Heart left ventricle (tissue), 16 donors: ENCODE measurements at regions of chr12 and their contacts with region 1.

Region 1: GRCh38 chr12:106345739-106346138 is 11.8 kb upstream of the POLR3B start:
- DNase-seq: peak in 4 of 5 donors; percentile 26 to 59 (median 34)
- ATAC-seq: peak; percentile 16 to 65 (median 58)
- H3K4me3 ChIP-seq: no peak overlapping the region
- H3K27ac ChIP-seq: peak overlapping the region in 4 of 12 donors; percentile 5 to 81 (median 54)
- H3K4me1 ChIP-seq: peaks cover 10 to 41% (median 31%) of the 10 kb centered on the region in 12 donors
- H3K27me3 ChIP-seq: no peaks in the 10 kb centered on the region
- CTCF ChIP-seq: peak; percentile 13 to 63 (median 44)
- POLR2A ChIP-seq: no peak

Region 2: GRCh38 chr12:106223485-106224354 is 122.0 kb before region 1 on chr12:
- intact Hi-C with region 1: loop called in 8 of 10 experiments (anchors 2 to 5 kb)
- DNase-seq: peak; percentile 68 to 79 (median 74)
- ATAC-seq: peak; percentile 38 to 79 (median 75)
- H3K4me3 ChIP-seq: no peak overlapping the region
- H3K27ac ChIP-seq: no peak overlapping the region
- H3K4me1 ChIP-seq: peaks cover 0 to 19% (median 8%) of the 10 kb centered on the region in 12 donors
- H3K27me3 ChIP-seq: no peaks in the 10 kb centered on the region
- CTCF ChIP-seq: peak; percentile 92 to 98 (median 94)
- POLR2A ChIP-seq: no peak

Region 3: GRCh38 chr12:106234449-106234848 is 111.3 kb before region 1 on chr12:
- intact Hi-C with region 1: loop called in 5 of 10 experiments (anchors 5 kb)
- DNase-seq: no peak
- ATAC-seq: no peak
- H3K4me3 ChIP-seq: no peak overlapping the region
- H3K27ac ChIP-seq: no peak overlapping the region
- H3K4me1 ChIP-seq: peaks cover 0 to 21% (median 4%) of the 10 kb centered on the region in 12 donors
- H3K27me3 ChIP-seq: no peaks in the 10 kb centered on the region
- CTCF ChIP-seq: no peak
- POLR2A ChIP-seq: no peak

Region 4: DNA sequence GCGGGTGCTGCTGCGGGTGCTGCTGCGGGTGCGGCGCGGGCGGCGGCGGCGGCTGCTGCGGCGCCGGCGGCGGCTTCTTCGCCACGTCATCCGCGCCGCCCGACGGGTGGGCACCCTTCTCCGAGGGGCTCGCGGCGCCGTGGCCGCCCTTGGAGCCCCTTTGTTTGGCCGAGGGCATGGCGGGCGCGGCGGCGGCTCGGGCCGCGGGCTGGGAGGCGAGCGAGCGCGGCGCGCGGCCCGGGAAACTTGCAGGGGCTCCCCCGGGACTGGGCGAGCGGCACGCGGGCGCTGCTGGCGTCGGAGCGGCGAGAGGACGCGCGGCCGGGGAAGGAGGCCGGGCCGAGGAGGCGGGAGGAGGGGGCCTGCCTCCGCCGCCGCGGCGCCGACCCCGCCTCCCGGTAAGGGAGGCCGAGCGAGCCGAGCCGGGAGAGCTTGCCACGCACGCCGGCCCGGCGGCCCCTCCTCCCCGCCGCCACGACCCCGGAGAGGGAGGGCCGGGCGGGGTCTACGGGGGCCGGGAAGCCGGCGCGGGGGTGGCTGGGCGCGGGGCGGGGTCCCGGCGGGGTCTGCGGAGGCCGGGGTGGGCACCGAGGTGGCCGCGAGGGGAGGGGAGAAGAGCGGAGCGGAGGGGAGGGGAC is 97.9 kb before region 1 on chr12 and contains the start of gene CKAP4:
- intact Hi-C with region 1: loop called in 3 of 10 experiments (anchors 5 kb)
- DNase-seq: peak; percentile 87 to 92 (median 87)
- ATAC-seq: peak; percentile 45 to 85 (median 84)
- H3K4me3 ChIP-seq: peak within 1 kb of the TSS; percentile 75 to 95 (median 91)
- H3K27ac ChIP-seq: peak within 1 kb of the TSS; percentile 90 to 100 (median 99)
- H3K4me1 ChIP-seq: peaks cover 3 to 55% (median 36%) of the 10 kb centered on the region in 12 donors
- H3K27me3 ChIP-seq: no peaks in the 10 kb centered on the region
- CTCF ChIP-seq: no peak
- POLR2A ChIP-seq: peak in 1 of 2 donors; percentile 42
- total RNA-seq, gene CKAP4: 39.9 to 70.7 (median 53.7) TPM

Region 5: GRCh38 chr12:106282457-106283097 is 63.2 kb before region 1 on chr12:
- intact Hi-C with region 1: loop called in 1 of 10 experiments (anchors 5 kb)
- DNase-seq: peak in 2 of 5 donors; percentile 34 to 47
- ATAC-seq: peak; percentile 23 to 63 (median 56)
- H3K4me3 ChIP-seq: no peak overlapping the region
- H3K27ac ChIP-seq: no peak overlapping the region
- H3K4me1 ChIP-seq: peaks cover 0 to 22% (median 12%) of the 10 kb centered on the region in 12 donors
- H3K27me3 ChIP-seq: no peaks in the 10 kb centered on the region
- CTCF ChIP-seq: peak; percentile 56 to 76 (median 70)
- POLR2A ChIP-seq: no peak

Region 6: GRCh38 chr12:106302401-106303201 is 43.1 kb before region 1 on chr12 and contains the start of gene TCP11L2:
- intact Hi-C with region 1: loop called in 6 of 10 experiments (anchors 5 kb)
- DNase-seq: peak; percentile 89 to 94 (median 92)
- ATAC-seq: peak; percentile 66 to 85 (median 80)
- H3K4me3 ChIP-seq: peak within 1 kb of the TSS; percentile 80 to 97 (median 94)
- H3K27ac ChIP-seq: peak within 1 kb of the TSS; percentile 92 to 100 (median 98)
- H3K4me1 ChIP-seq: peaks cover 8 to 72% (median 63%) of the 10 kb centered on the region in 12 donors
- H3K27me3 ChIP-seq: no peaks in the 10 kb centered on the region
- CTCF ChIP-seq: no peak
- POLR2A ChIP-seq: peak in 1 of 2 donors; percentile 82
- total RNA-seq, gene TCP11L2: 60.8 to 147 (median 113) TPM

Region 7: GRCh38 chr12:106309671-106310505 is 35.9 kb before region 1 on chr12:
- intact Hi-C with region 1: loop called in 4 of 10 experiments (anchors 5 kb)
- DNase-seq: peak in 2 of 5 donors; percentile 35 to 39
- ATAC-seq: peak in 3 of 4 donors; percentile 13 to 47 (median 28)
- H3K4me3 ChIP-seq: no peak overlapping the region
- H3K27ac ChIP-seq: peak overlapping the region in 11 of 12 donors; percentile 11 to 100 (median 52)
- H3K4me1 ChIP-seq: peaks cover 4 to 74% (median 65%) of the 10 kb centered on the region in 12 donors
- H3K27me3 ChIP-seq: no peaks in the 10 kb centered on the region
- CTCF ChIP-seq: no peak
- POLR2A ChIP-seq: no peak

Region 8: DNA sequence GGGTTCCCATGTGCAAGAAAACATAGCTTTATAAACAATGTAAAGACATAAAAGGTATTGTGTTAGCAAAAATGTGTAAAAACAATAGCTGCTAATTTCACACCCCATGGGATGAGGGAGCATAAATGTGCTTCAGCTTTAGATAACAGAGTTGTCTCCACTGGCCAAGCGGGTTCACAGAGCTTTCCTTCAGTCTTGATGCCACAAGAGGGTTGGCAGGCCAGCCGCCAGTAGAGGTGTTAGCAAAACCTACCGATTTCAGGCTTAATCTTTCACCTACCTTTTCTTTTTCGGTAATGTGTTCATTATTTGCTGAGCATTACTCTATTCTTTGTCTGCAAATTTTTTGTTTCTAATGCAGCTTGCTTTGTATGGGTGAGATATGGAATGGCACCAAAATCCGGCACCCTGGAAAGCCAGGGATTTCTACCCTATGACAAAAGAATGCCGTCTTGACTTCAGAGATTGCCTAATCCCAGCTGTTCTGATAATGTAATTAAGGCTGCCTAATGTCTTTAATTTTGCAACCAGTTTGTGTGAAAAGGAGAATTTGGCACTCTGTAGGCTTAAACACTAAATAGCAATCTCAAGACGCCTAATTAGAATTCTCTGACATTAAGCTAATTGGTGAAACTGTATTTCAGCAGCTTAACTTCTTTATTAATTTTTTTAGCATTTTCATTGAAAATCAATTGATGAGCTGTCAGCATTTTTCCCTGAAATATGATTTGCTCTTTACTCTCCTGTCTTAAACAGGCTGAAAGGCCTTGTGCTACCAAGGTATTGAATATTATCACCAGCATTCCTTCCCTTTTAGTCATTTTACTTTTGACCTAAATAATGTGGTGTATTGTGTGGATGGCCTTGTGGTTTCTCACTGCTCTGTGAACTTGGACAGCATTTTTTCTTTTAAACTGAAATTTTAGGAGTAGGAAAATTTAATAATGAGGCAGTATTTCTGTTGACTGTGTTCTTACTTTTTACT is 72.5 kb after region 1 on chr12:
- intact Hi-C with region 1: no loop called
- DNase-seq: no peak
- ATAC-seq: peak in 2 of 4 donors; percentile 37 to 81
- H3K4me3 ChIP-seq: no peak overlapping the region
- H3K27ac ChIP-seq: peak overlapping the region in 4 of 12 donors; percentile 5 to 22 (median 14)
- H3K4me1 ChIP-seq: peaks cover 0 to 22% (median 10%) of the 10 kb centered on the region in 12 donors
- H3K27me3 ChIP-seq: no peaks in the 10 kb centered on the region
- CTCF ChIP-seq: no peak
- POLR2A ChIP-seq: no peak